ENCODE measurements at regions of chr4 and their contacts with region 1.

Region 1: DNA sequence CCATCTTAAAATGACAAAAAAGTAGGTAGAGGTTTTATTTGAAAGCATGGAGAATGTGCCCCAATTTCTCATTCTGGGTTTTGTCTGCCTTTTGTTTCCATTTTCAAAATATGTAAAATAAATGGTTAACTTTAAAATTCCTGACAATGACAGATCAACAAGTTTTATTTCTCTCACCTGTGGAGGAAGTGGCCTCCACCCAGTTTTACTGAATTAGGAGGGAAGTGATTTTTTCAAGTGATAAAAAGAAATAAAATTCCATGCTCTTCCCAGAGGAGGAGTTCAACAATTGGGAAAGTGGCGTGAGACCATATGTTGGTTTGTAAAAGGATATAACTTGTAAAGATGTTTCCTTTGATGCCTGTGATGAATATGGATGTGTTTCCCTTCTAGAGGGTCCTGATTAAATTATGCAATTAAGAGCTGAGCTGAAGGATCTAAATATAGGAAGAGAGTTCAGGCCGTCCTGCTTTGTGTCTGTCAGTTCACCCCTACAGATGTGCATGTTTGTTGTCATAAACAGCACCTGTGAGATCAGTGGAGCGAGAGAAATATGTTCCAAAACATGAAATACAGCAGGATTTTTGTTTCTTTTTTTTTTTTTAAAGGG is 19.5 kb downstream of the SMAD1 start:
- DNase-seq: peak; percentile 91
- H3K4me3 ChIP-seq: no peak overlapping the region
- H3K27ac ChIP-seq: peak overlapping the region; percentile 27
- H3K4me1 ChIP-seq: peaks cover 54% of the 10 kb centered on the region
- H3K27me3 ChIP-seq: no peaks in the 10 kb centered on the region
- CTCF ChIP-seq: no peak
- POLR2A ChIP-seq: no peak

Region 2: DNA sequence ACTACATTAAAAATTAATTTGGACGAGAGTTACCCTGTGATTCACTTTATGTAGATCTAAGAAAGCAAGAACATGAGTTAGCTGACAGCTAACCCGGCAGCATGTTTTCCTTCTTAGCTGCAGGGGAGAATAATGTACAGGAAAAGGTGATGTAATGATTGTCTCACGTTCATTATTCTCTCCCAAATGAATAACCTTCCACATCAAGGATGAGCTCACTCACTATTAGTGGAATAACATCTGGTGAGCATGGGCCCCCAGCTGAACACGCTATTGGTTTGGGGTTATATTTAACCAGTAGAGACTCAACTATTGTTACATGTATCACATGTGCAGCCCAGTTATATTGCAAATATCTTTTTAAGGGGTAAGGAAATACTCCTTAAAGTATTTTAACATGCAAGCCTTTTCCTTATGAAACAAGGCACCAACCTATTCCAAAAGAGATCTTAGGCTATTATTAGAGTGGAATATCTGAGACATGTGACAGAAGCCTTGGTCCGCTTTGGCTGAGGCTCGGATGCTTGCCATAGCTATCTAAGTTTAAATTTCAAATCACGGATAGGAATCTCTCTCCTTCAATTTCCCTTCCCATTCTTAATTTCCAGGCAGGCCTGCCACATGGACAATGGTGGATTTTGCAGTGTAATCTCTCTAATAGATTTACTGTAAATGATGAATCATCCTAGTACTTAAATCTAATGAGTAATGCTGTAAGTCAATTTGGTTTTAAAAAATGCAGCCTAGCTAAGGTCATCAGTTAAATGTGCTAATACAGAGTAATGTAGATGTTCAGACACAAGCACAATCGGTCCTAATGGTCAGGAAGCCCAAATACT is 221.8 kb before region 1 on chr4:
- CTCF ChIA-PET with region 1: no interaction called
- POLR2A ChIA-PET with region 1: no interaction called
- dilution Hi-C with region 1: no loop called
- intact Hi-C with region 1: loop called (anchors 2 kb)
- DNase-seq: peak; percentile 84
- H3K4me3 ChIP-seq: no peak overlapping the region
- H3K27ac ChIP-seq: peak overlapping the region; percentile 97
- H3K4me1 ChIP-seq: peaks cover 38% of the 10 kb centered on the region
- H3K27me3 ChIP-seq: no peaks in the 10 kb centered on the region
- CTCF ChIP-seq: no peak
- POLR2A ChIP-seq: no peak

Region 3: GRCh38 chr4:145487631-145488030 is 13.5 kb before region 1 on chr4:
- CTCF ChIA-PET with region 1: interaction called, 3 read pairs
- POLR2A ChIA-PET with region 1: interaction called, 6 read pairs
- dilution Hi-C with region 1: no loop called
- intact Hi-C with region 1: loop called (anchors 1 kb)
- DNase-seq: no peak
- H3K4me3 ChIP-seq: no peak overlapping the region
- H3K27ac ChIP-seq: no peak overlapping the region
- H3K4me1 ChIP-seq: peaks cover 32% of the 10 kb centered on the region
- H3K27me3 ChIP-seq: no peaks in the 10 kb centered on the region
- CTCF ChIP-seq: no peak
- POLR2A ChIP-seq: no peak